ENCODE measurements at regions of chr5 and their contacts with region 1.

Region 1: DNA sequence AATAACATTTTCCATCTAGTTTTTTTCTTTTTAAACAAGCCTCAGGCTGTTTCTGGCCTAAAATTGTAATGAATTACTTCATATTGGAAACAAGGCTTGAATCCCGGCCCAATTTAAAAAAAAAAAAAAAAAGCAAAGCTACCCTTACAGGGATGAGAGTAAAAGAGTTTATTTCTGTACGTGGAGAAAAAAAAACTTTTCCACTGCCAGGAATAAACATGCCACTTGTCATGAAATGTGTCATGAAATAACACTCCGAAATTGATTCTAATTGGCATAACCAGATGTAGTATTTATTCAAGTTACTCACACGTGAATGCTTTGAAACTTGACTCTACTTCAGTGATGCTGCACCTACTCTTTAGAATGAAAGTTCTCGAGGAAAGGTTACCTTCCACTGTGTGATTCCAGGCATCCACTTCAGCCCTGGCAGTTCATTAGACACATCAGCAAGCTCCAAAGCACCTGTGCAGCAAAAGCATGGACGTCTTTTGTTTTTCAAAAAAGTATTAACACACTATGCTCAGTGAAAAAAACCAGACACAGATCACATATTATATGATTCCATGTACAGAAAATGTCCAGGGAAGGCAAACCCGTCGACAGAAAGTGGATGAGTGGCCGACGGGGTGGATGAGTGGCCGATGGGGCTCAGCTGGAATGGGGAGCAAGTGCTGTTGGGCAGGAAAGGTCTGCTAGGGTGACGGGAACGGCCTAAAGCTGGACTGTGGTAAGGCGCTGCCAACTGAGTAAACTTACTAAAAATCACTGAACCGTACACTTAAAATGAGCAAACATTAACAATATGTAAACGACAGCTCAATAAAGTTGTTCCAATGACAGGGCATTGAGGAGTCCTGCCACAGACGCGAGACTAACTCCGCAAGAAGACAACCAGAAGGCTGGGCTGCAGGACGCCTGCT is 21.2 kb downstream of the NSUN2 start:
- DNase-seq: no peak
- ATAC-seq: no peak

Region 2: GRCh38 chr5:5454391-5454790 is 1157.2 kb before region 1 on chr5:
- intact Hi-C with region 1: no loop called
- DNase-seq: no peak
- ATAC-seq: no peak

Region 3: DNA sequence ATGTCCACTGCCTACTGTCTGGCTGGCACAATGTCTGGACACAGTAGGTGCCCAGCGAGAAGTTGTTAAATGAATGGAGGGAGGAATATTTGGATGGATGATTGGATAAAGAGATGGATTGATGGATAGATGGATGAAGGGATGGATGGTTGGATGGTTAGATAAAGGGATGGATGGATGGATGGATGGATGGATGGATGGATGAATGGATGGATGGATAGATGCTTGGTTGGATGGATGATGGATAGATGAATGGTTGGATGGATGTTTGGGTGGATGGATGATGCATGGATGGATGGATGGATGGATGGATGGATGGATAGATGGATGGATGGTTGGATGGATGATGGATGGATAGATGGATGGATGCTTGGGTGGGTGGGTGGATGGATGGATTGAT is 72.5 kb before region 1 on chr5:
- intact Hi-C with region 1: loop called (anchors 2 kb)
- DNase-seq: no peak
- ATAC-seq: no peak

Region 4: DNA sequence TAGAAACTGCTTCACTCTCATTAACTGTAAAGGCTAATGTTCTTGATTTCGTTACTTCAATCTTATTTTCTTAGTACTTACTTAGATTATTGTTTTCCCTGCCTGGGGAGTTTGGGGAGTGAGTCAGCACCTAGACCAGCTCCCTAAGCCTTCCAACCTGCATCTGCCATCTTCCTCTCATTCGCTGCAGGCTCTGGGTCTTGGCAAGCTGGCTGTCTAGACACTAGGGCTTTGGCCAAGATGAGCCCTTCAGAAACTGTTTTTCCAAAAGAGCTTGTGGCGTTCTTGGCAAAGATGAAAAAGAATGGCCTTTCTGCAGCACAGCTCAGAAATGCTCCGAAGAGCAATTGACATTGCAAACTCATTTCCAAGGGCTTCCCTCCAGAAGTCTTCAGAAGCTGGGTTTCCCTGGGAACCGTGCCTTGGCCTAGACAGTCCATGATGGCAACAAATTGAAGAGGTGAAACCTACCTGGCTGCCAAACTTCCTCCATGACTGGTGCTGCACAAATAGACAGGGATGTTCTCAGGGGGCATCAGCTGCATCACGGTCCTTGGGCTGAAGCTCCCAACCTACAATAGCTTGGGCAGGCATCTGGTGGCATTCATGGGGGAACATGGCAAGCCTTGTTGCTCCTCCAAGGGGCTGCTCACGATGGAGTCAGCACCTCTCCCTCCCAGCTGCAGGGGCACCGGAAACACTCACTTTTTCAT is 55.4 kb before region 1 on chr5:
- intact Hi-C with region 1: no loop called
- DNase-seq: no peak
- ATAC-seq: no peak